Transverse colon (tissue), 4 donors: ENCODE measurements at regions of chr5 and their contacts with region 1.

Region 1: DNA sequence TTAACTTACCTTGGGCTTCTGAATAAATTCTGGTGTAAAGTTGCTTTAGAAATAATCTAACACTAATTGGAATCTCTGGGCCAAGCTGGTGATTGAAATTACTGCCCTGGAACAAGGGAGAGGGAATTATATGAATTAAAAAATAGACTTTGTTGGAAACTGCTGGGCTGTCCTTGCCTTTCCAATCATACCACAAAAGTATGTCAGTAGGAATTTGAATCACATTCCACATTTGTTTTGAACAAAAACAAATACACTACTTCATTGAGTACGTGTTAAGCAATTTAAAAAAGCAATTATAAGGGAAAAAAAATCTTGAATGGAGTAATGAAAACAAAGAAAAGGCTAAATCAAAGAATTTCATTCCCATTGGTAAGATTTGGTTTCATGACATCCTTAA is 102.5 kb upstream of the SREK1 start:
- DNase-seq: no peak
- H3K4me3 ChIP-seq: no peak overlapping the region
- H3K27ac ChIP-seq: no peak overlapping the region
- H3K4me1 ChIP-seq: no peaks in the 10 kb centered on the region
- H3K27me3 ChIP-seq: no peaks in the 10 kb centered on the region
- CTCF ChIP-seq: no peak
- EP300 ChIP-seq: no peak
- POLR2A ChIP-seq: no peak

Region 2: DNA sequence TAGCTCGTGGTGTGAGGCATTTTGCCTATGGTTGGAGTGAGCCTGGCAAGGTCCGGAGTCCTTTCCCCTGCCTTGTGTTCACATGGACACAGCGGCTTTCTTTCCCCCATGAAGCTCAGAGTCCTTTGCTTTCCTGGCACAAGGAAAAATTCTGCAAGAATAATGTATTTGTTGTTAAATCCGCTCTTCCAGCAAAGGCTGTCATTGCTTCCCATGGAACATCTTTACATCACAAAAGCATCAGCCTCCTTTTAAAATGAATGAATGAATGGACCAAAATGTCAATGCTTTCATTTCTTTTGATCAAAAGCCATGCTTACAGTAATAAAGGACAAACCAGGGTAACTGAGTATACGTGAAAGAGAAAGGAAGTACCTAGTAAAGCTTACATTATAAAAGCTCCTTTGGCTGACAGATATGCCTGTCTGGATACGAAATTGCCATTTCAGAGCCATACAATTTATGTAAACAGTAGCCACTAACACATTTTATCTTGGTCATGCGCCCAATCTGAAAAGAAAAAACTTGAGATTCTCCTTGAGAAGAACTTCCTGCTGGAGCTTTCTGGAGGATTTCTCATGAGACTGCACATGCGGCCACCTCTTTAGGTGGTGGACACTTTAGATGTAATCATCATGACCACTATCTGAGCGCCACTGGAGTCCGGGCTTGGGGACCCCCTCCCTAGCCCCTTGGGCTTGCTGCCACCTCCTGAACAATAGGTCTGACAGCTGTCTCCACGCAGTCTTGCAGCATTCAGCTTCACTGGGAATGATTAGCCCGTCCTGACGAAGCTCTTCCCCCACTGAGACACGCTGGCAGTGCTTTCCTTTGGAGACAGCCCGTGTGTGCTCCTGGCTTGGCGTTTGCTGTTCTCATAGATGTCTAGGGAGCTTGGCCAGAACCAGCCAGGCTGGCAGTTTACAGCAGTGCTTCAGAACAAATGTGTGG is 915.8 kb before region 1 on chr5:
- in situ Hi-C with region 1: no loop called
- intact Hi-C with region 1: loop called (anchors 5 kb)
- DNase-seq: no peak
- H3K4me3 ChIP-seq: no peak overlapping the region
- H3K27ac ChIP-seq: peak overlapping the region; percentile 15 to 37 (median 28)
- H3K4me1 ChIP-seq: peaks cover 0 to 14% (median 0%) of the 10 kb centered on the region in 4 donors
- H3K27me3 ChIP-seq: no peaks in the 10 kb centered on the region
- CTCF ChIP-seq: no peak
- EP300 ChIP-seq: no peak
- POLR2A ChIP-seq: no peak

Region 3: DNA sequence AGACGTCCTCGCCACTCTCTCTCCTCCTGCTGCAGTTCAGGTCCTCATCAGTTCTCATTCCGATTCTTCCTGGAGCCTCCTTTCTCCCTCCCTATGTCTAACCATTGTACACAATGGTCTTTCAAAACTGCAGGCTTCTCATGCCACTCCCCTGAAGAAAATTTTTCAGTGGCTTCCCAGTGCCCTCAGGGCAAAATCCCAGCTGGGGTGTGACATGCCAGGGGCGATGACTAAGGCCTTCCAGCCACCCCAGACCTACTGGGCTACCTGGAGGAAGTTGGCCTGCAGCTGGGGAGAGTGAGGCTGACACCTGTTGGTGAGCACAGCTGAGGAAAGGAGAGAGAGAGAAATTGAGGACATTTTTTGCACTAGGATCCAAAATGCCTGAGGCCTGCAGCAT is 167.7 kb after region 1 on chr5:
- in situ Hi-C with region 1: no loop called
- intact Hi-C with region 1: no loop called
- DNase-seq: no peak
- H3K4me3 ChIP-seq: no peak overlapping the region
- H3K27ac ChIP-seq: peak overlapping the region in 3 of 4 donors; percentile 10 to 80 (median 59)
- H3K4me1 ChIP-seq: peaks cover 0 to 5% (median 0%) of the 10 kb centered on the region in 4 donors
- H3K27me3 ChIP-seq: no peaks in the 10 kb centered on the region
- CTCF ChIP-seq: no peak
- EP300 ChIP-seq: no peak
- POLR2A ChIP-seq: no peak